ENCODE measurements at regions of chr1 and their contacts with region 1.

Region 1: DNA sequence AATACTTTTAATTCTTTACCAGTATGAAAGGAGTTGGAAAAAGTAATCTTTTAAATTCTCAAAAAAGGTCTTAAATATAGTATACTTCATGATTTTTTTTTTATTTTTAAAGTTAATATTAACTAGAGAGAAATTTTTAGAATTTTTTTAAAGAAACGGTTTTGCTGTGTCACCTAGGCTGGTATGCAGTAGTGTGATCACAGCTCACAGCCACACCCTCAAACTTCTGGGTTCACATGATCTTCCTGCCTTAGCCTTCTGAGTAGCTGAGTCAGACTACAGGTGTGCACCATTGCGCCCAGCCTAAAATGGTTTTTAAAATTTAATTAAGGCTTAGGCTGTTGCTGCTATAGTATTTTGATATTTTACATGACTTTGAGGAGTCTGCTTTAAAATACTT is 52.4 kb downstream of the TLCD4 start:
- DNase-seq: peak; percentile 54 to 91
- H3K4me3 ChIP-seq: no peak overlapping the region
- H3K27ac ChIP-seq: peak overlapping the region; percentile 74
- H3K4me1 ChIP-seq: peaks cover 31% of the 10 kb centered on the region
- H3K27me3 ChIP-seq: no peaks in the 10 kb centered on the region
- CTCF ChIP-seq: no peak

Region 2: GRCh38 chr1:94983171-94983739 is 186.3 kb before region 1 on chr1:
- CTCF ChIA-PET with region 1: no interaction called
- POLR2A ChIA-PET with region 1: no interaction called
- intact Hi-C with region 1: no loop called
- DNase-seq: peak in 1 of 2 experiments; percentile 50
- H3K4me3 ChIP-seq: no peak overlapping the region
- H3K27ac ChIP-seq: no peak overlapping the region
- H3K4me1 ChIP-seq: peaks cover 15% of the 10 kb centered on the region
- H3K27me3 ChIP-seq: no peaks in the 10 kb centered on the region
- CTCF ChIP-seq: no peak

Region 3: DNA sequence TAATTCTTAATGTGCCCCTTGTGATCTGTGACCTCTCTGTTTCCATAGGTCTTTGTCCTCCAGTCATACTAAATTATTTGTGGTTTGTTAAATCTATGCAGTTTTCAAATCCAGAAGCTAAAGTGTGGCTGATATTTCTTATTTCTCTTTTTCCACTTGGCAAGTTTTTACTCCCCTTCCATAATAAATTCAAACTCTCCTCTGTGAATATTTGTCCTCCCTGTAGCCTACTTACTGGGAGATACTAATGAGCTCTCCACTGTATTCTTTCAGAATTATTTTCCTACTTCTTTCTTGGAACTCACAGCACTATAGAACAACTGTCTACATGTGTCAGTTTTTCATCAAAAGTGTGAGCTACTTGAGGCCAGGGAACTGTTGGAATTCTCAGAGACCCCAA is 1121.3 kb after region 1 on chr1:
- CTCF ChIA-PET with region 1: no interaction called
- POLR2A ChIA-PET with region 1: interaction called, 21 read pairs
- intact Hi-C with region 1: no loop called
- DNase-seq: no peak
- H3K4me3 ChIP-seq: no peak overlapping the region
- H3K27ac ChIP-seq: no peak overlapping the region
- H3K4me1 ChIP-seq: no peaks in the 10 kb centered on the region
- H3K27me3 ChIP-seq: no peaks in the 10 kb centered on the region
- CTCF ChIP-seq: no peak

Measured in PC-9 (cell line).